ENCODE measurements at regions of chr12 and their contacts with region 1.

Region 1: GRCh38 chr12:50637870-50638481 is 125.9 kb upstream of the ATF1 start:
- DNase-seq: no peak
- ATAC-seq: no peak
- H3K4me3 ChIP-seq: no peak overlapping the region
- H3K27ac ChIP-seq: no peak overlapping the region
- H3K4me1 ChIP-seq: peaks cover 41% of the 10 kb centered on the region
- H3K27me3 ChIP-seq: no peaks in the 10 kb centered on the region
- CTCF ChIP-seq: peak; percentile 20 to 73 (median 67)
- POLR2A ChIP-seq: no peak

Region 2: DNA sequence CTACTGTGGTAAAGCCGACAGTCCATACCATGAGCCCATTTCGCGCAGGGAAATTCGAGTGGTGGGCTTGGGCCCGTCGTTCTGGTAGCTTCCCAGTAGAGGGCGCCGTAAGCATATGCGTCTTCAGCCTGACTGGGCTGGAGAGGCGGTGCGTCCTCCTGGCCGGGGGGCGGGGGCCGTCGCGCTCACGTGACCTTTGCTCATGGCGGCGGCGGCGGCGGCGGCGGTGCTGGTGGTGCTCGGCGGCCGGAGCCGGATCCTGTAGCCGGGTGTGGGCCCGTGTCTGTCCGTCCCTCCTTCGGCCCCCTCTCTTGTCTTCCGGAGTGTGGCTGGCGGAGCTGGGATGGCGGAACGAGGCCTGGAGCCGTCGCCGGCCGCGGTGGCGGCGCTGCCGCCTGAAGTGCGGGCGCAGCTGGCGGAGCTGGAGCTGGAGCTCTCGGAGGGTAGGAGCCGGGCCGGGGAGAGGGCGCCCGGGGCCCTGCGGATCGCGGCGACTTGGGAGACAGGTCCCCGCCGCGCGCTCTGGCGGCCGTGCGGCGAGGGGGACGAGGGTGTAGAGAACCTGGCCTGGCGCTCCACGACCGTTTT is 133.1 kb before region 1 on chr12 and contains the start of gene DIP2B:
- intact Hi-C with region 1: loop called (anchors 5 kb)
- DNase-seq: peak; percentile 96 to 97 (median 96)
- ATAC-seq: peak; percentile 95
- H3K4me3 ChIP-seq: peak within 1 kb of the TSS; percentile 18 to 90
- H3K27ac ChIP-seq: peak within 1 kb of the TSS; percentile 88 to 97 (median 93)
- H3K4me1 ChIP-seq: peaks cover 41% of the 10 kb centered on the region
- H3K27me3 ChIP-seq: no peaks in the 10 kb centered on the region
- CTCF ChIP-seq: peak; percentile 86 to 99 (median 97)
- POLR2A ChIP-seq: peak; percentile 56 to 77 (median 57)
- total RNA-seq, gene DIP2B: 15.8 to 28.7 TPM